CD4-positive, alpha-beta T cell (primary cell): ENCODE measurements at regions of chr17 and their contacts with region 1.

Region 1: GRCh38 chr17:3738562-3739295 is 15.0 kb downstream of the HASPIN start:
- DNase-seq: peak; percentile 43 to 80 (median 61)
- ATAC-seq: peak; percentile 89
- H3K4me3 ChIP-seq: no peak overlapping the region
- H3K4me3 Mint-ChIP-seq: peak overlapping the region; percentile 27
- H3K27ac ChIP-seq: no peak overlapping the region
- H3K27ac Mint-ChIP-seq: peak overlapping the region; percentile 54
- H3K4me1 ChIP-seq: peaks cover 43% of the 10 kb centered on the region
- H3K4me1 Mint-ChIP-seq: peaks cover 44% of the 10 kb centered on the region
- H3K27me3 ChIP-seq: no peaks in the 10 kb centered on the region
- H3K27me3 Mint-ChIP-seq: no peaks in the 10 kb centered on the region
- CTCF ChIP-seq: no peak

Region 2: DNA sequence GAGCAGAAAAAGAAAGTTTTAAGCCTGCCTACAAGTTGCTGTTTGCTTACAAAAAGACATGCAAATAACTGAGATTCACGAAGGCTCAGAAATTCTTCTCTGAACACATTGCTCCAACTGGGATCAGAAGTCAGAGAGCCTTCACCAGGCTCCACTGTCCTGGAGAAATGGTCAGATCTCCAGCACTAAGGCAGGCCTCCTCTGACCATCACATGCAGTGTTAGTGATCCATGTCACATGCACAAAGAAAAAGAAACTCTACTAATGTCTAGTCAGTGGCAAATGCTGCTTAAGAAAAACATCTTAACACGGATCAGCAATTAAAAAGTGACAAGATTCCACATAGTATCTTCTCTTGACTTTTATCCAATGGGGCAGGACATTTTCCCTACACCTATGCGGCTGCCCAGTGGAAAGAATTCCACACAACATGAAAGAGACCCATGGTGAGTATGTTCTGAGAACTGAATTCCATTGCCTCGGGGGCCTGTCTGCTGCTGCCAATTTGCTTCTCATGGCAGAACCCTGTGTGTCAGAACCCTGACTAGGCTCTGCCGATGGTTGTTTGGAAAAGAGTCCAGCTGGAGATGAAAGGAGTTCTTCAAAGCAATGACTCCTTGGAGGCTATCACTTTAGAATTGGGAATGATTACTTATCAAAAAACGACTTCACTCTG is 1587.2 kb before region 1 on chr17:
- CTCF ChIA-PET with region 1: no interaction called
- POLR2A ChIA-PET with region 1: no interaction called
- intact Hi-C with region 1: no loop called
- DNase-seq: no peak
- ATAC-seq: no peak
- H3K4me3 ChIP-seq: no peak overlapping the region
- H3K4me3 Mint-ChIP-seq: no peak overlapping the region
- H3K27ac ChIP-seq: no peak overlapping the region
- H3K27ac Mint-ChIP-seq: no peak overlapping the region
- H3K4me1 ChIP-seq: peaks cover 3% of the 10 kb centered on the region
- H3K4me1 Mint-ChIP-seq: peaks cover 5% of the 10 kb centered on the region
- H3K27me3 ChIP-seq: no peaks in the 10 kb centered on the region
- H3K27me3 Mint-ChIP-seq: no peaks in the 10 kb centered on the region
- CTCF ChIP-seq: no peak

Region 3: GRCh38 chr17:3723556-3724369 is 15.0 kb before region 1 on chr17 and contains the start of gene HASPIN:
- CTCF ChIA-PET with region 1: interaction called, 11 read pairs
- POLR2A ChIA-PET with region 1: interaction called, 6 read pairs
- intact Hi-C with region 1: no loop called
- DNase-seq: peak; percentile 86 to 97 (median 90)
- ATAC-seq: peak; percentile 88
- H3K4me3 ChIP-seq: peak within 1 kb of the TSS; percentile 94
- H3K4me3 Mint-ChIP-seq: peak within 1 kb of the TSS; percentile 89
- H3K27ac ChIP-seq: peak within 1 kb of the TSS; percentile 57 to 64
- H3K27ac Mint-ChIP-seq: peak within 1 kb of the TSS; percentile 75
- H3K4me1 ChIP-seq: peaks cover 48% of the 10 kb centered on the region
- H3K4me1 Mint-ChIP-seq: peaks cover 39% of the 10 kb centered on the region
- H3K27me3 ChIP-seq: no peaks in the 10 kb centered on the region
- H3K27me3 Mint-ChIP-seq: no peaks in the 10 kb centered on the region
- CTCF ChIP-seq: no peak
- total RNA-seq, gene HASPIN: 0.22 to 0.25 TPM

Region 4: GRCh38 chr17:3766779-3767178 is 28.1 kb after region 1 on chr17:
- CTCF ChIA-PET with region 1: interaction called, 23 read pairs
- POLR2A ChIA-PET with region 1: interaction called, 4 read pairs
- intact Hi-C with region 1: no loop called
- DNase-seq: peak in 5 of 14 experiments; percentile 19 to 75 (median 39)
- ATAC-seq: no peak
- H3K4me3 ChIP-seq: no peak overlapping the region
- H3K4me3 Mint-ChIP-seq: peak overlapping the region; percentile 54
- H3K27ac ChIP-seq: no peak overlapping the region
- H3K27ac Mint-ChIP-seq: peak overlapping the region; percentile 92
- H3K4me1 ChIP-seq: peaks cover 86% of the 10 kb centered on the region
- H3K4me1 Mint-ChIP-seq: peaks cover 67% of the 10 kb centered on the region
- H3K27me3 ChIP-seq: no peaks in the 10 kb centered on the region
- H3K27me3 Mint-ChIP-seq: no peaks in the 10 kb centered on the region
- CTCF ChIP-seq: no peak

Region 5: DNA sequence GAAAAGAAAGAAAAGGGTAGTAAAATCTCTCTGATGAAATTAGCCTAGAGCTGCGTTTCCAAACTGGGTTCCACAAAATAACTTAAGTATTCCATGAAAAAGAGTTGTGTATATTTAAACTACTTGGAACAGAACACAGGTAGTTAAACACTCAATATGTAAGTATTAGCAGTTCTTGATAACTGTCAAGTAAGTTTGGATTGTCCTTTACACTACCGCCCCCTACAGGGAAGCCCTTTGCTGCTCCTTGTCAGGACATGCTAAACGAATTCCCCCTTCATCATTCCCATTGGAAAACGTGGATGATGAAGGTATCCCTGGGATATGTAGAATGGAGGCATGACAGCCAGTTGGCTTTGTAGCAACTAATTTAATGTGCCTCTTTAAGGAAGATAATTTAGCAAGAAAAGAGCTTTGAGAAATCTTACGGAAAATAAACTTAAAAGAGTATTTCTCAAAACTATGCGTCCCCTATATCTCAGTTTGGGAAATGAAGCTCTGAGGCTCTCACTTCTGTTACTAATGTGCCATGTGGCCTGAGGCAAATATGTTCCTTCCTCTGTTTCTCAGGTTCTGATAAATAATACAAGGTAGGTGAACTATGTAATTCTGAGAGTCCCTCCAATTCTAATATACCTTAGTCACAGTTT is 88.5 kb after region 1 on chr17:
- CTCF ChIA-PET with region 1: interaction called, 106 read pairs
- POLR2A ChIA-PET with region 1: interaction called, 14 read pairs
- intact Hi-C with region 1: loop called (anchors 1 kb)
- DNase-seq: peak; percentile 44 to 85 (median 66)
- ATAC-seq: peak; percentile 67
- H3K4me3 ChIP-seq: no peak overlapping the region
- H3K4me3 Mint-ChIP-seq: no peak overlapping the region
- H3K27ac ChIP-seq: no peak overlapping the region
- H3K27ac Mint-ChIP-seq: no peak overlapping the region
- H3K4me1 ChIP-seq: no peaks in the 10 kb centered on the region
- H3K4me1 Mint-ChIP-seq: peaks cover 6% of the 10 kb centered on the region
- H3K27me3 ChIP-seq: no peaks in the 10 kb centered on the region
- H3K27me3 Mint-ChIP-seq: no peaks in the 10 kb centered on the region
- CTCF ChIP-seq: peak; percentile 84